Activated CD4-positive, alpha-beta T cell treated with anti-CD3 and anti-CD28 coated beads, Interleukin-2, amount 10 ng/mL, durations not matched to agents 24 days and 14 days (primary cell): ENCODE measurements at regions of chr12 and their contacts with region 1.

Region 1: GRCh38 chr12:46794593-46795190 is 31.1 kb downstream of the SLC38A4 start:
- DNase-seq: no peak
- H3K4me3 Mint-ChIP-seq: peak overlapping the region; percentile 2
- H3K27ac Mint-ChIP-seq: peak overlapping the region; percentile 30
- H3K4me1 Mint-ChIP-seq: peaks cover 5% of the 10 kb centered on the region
- H3K27me3 Mint-ChIP-seq: no peaks in the 10 kb centered on the region

Region 2: DNA sequence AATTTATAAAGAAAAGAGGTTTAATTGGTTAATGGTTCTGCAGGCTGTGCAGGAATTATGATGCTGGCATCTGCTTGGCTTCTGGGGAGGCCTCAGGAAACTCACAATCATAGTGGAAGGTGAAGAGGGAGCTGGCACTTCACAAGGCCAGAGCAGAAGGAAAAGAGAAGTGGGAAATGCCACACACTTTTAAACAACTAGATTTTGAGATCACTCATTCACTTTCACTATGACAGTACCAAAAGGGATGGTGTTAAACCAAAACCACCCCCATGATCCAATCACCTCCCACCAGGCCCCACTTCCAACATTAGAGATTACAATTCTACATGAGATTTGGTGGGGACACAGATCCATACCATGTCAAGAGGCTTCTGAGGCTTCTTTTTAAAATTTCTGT is 31.5 kb before region 1 on chr12:
- intact Hi-C with region 1: loop called (anchors 2 kb)
- DNase-seq: no peak
- H3K4me3 Mint-ChIP-seq: no peak overlapping the region
- H3K27ac Mint-ChIP-seq: no peak overlapping the region
- H3K4me1 Mint-ChIP-seq: peaks cover 4% of the 10 kb centered on the region
- H3K27me3 Mint-ChIP-seq: peaks cover 2% of the 10 kb centered on the region

Region 3: DNA sequence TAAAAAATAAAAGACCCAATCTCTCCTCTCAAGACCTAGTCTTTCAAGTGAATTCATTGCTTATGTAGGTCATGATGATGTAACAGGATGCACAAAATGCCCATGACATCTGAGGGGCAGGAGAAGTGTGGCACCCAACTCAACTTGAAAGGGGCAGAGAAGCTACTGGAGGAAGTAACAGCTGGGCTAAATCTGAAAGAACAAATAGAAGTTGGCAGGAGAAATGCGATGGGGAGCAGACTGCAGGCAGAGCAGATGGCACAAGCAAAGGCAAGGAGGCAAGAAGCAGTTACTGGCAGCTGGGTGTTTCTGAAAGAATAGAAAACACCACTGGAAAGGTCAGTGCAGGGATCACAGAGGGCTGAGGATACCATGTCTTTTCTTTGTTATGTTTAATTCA is 16.5 kb after region 1 on chr12:
- intact Hi-C with region 1: no loop called
- DNase-seq: no peak
- H3K4me3 Mint-ChIP-seq: no peak overlapping the region
- H3K27ac Mint-ChIP-seq: no peak overlapping the region
- H3K4me1 Mint-ChIP-seq: no peaks in the 10 kb centered on the region
- H3K27me3 Mint-ChIP-seq: peaks cover 23% of the 10 kb centered on the region

Region 4: GRCh38 chr12:46874642-46875041 is 80.0 kb after region 1 on chr12:
- intact Hi-C with region 1: no loop called
- DNase-seq: no peak
- H3K4me3 Mint-ChIP-seq: no peak overlapping the region
- H3K27ac Mint-ChIP-seq: no peak overlapping the region
- H3K4me1 Mint-ChIP-seq: no peaks in the 10 kb centered on the region
- H3K27me3 Mint-ChIP-seq: peaks cover 3% of the 10 kb centered on the region